OCI-LY7 (cell line): ENCODE measurements at regions of chr19 and their contacts with region 1.

Region 1: DNA sequence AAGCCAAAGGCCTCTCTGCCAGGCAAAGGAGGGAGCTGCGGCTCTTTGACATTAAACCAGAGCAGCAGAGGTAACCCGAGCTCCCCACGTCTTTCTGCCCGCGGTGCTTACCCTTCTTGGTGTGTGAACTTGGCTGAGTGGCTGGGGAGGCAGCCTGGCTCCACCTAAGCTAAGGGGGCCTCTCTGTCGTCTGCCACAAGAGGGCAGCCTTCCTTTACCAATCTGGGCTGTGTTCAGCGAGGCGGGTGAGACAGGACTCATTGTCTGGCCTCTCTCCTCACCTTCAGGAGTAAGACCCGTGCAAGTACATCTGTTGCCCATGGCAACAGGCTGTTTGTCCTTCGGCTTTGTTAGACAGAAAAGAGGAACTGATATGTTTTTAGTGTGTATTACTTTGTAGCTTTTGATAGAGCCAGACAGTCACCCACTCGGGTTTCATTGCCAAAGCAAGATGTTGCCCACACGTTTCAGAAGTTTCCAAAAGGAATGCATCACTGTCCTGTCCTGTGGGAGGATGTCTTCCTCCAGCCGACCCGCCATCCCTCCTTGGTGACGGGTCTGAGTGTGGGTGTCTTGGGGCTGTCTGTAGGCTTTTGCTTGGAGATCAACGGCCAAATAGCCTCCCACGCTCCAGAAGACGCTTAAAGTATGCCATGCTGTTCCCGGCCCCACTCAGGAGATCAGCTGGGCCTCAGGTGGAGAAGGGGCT is 4.6 kb downstream of the POP4 start:
- DNase-seq: peak; percentile 95
- H3K4me3 ChIP-seq: no peak overlapping the region
- H3K27ac ChIP-seq: peak overlapping the region; percentile 16
- H3K4me1 ChIP-seq: peaks cover 19% of the 10 kb centered on the region
- CTCF ChIP-seq: peak; percentile 92

Region 2: GRCh38 chr19:29212648-29213573 is 397.8 kb before region 1 on chr19 and contains the start of gene UQCRFS1:
- CTCF ChIA-PET with region 1: no interaction called
- POLR2A ChIA-PET with region 1: no interaction called
- intact Hi-C with region 1: loop called (anchors 5 kb)
- DNase-seq: peak; percentile 96
- H3K4me3 ChIP-seq: peak within 1 kb of the TSS; percentile 89
- H3K27ac ChIP-seq: peak within 1 kb of the TSS; percentile 68
- H3K4me1 ChIP-seq: peaks cover 27% of the 10 kb centered on the region
- CTCF ChIP-seq: no peak
- total RNA-seq, gene UQCRFS1: 32.6 and 40.6 TPM in 2 replicates

Region 3: GRCh38 chr19:29665215-29665825 is 54.6 kb after region 1 on chr19 and contains the start of gene PLEKHF1:
- CTCF ChIA-PET with region 1: interaction called, 5 read pairs
- POLR2A ChIA-PET with region 1: interaction called, 9 read pairs
- intact Hi-C with region 1: loop called (anchors 2 kb)
- DNase-seq: peak; percentile 88
- H3K4me3 ChIP-seq: peak within 1 kb of the TSS; percentile 86
- H3K27ac ChIP-seq: no peak within 1 kb of the TSS
- H3K4me1 ChIP-seq: peaks cover 30% of the 10 kb centered on the region
- CTCF ChIP-seq: no peak
- total RNA-seq, gene PLEKHF1: 7.0 TPM in 2 replicates

Region 4: DNA sequence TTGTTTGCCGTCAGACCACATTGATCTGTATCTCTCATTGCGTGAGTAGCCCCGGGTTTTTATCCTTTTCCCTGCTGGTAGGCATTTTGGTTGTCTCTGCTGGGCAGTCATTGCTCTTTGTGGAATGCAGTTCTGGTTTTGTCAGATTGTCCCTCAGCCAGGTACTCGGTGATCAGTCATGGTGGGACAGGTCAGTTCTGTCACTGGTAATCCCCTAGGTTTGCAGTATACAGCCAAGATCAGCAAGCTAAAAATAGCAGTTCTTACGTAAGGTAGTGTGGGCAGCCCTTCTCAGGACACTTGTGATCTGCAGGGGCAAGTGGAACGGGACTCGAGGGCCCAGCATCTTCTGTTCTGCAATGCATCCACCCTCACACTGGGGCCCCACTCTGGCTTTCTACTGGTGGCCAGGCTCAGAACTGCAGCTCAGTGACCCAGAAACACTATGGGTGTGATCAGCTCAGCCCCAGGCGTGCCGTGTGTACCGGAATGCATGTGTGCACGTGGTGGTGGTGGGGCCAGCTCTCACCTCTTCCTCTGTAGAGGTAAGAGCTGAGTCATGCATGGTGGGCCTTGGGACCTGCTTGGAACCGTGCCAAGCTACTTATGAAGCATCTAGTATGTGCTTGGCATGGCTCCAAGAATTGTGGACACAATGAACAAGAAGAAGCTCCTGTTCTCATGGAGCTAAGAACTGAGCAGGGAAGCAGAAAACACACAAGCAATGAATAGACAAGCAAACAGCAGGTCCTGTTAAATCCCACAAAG is 60.9 kb after region 1 on chr19:
- CTCF ChIA-PET with region 1: interaction called, 5 read pairs
- POLR2A ChIA-PET with region 1: interaction called, 10 read pairs
- intact Hi-C with region 1: no loop called
- DNase-seq: peak; percentile 34
- H3K4me3 ChIP-seq: no peak overlapping the region
- H3K27ac ChIP-seq: no peak overlapping the region
- H3K4me1 ChIP-seq: peaks cover 42% of the 10 kb centered on the region
- CTCF ChIP-seq: peak; percentile 52

Region 5: GRCh38 chr19:29694669-29695627 is 84.2 kb after region 1 on chr19:
- CTCF ChIA-PET with region 1: interaction called, 4 read pairs
- POLR2A ChIA-PET with region 1: interaction called, 3 read pairs
- intact Hi-C with region 1: loop called (anchors 1 kb)
- DNase-seq: peak; percentile 60
- H3K4me3 ChIP-seq: no peak overlapping the region
- H3K27ac ChIP-seq: no peak overlapping the region
- H3K4me1 ChIP-seq: peaks cover 6% of the 10 kb centered on the region
- CTCF ChIP-seq: peak; percentile 84

Region 6: GRCh38 chr19:29714953-29715700 is 104.4 kb after region 1 on chr19 and contains the start of gene C19orf12:
- CTCF ChIA-PET with region 1: interaction called, 13 read pairs
- POLR2A ChIA-PET with region 1: interaction called, 21 read pairs
- intact Hi-C with region 1: loop called (anchors 1 kb)
- DNase-seq: peak; percentile 82
- H3K4me3 ChIP-seq: peak within 1 kb of the TSS; percentile 99
- H3K27ac ChIP-seq: peak within 1 kb of the TSS; percentile 68
- H3K4me1 ChIP-seq: peaks cover 24% of the 10 kb centered on the region
- CTCF ChIP-seq: no peak
- total RNA-seq, gene C19orf12: 11.9 and 12.5 TPM in 2 replicates